Thyroid gland (tissue), 4 donors: ENCODE measurements at regions of chr3 and their contacts with region 1.

Region 1: DNA sequence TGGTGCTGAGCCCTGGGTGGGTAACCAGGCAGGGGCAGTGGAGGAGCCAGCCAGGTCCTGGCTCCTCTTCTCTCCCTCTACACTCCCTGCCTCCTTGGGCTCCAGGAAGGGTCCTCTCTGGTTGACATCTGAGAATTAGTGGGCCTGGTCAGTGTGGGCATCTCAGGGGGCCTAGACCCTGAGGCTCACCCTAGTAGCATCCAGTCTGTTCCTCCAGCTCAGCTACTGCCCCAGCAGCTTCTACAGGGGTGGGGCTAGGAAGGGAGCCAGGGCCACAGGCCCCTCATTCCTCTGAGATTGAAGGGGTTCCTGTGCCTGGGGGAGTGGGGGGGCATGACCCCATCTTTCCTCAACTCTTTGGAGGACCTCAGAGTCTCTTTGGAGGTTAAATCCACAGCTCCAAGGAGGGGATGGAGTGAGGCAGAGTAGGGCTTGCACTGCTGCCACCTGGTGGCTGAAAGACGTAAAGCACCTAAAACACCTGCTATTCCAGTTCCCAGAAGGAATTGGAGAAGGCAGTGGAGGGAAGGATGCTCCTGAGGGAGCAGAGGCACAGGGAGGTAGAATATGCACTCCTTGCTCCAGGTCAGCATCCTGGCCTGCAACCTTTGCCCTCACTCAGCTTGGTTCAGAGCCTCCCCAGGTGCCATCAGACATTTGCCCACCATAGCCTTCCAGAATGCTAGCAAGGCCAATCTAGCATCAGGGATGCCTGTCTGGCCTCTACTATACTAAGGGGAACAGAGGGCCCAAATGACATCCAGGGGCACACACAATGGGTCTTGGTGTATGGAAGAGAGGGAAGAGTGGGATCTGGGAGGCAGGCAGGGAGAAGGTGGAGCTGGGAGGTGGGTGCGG is 25.1 kb downstream of the C3orf18 start:
- DNase-seq: peak; percentile 75 to 76
- H3K4me3 ChIP-seq: no peak overlapping the region
- H3K27ac ChIP-seq: no peak overlapping the region
- H3K4me1 ChIP-seq: peaks cover 2 to 3% of the 10 kb centered on the region in 2 donors
- H3K27me3 ChIP-seq: no peaks in the 10 kb centered on the region
- CTCF ChIP-seq: peak; percentile 82 to 93 (median 88)
- POLR2A ChIP-seq: no peak

Region 2: GRCh38 chr3:50348037-50348436 is 194.4 kb before region 1 on chr3:
- intact Hi-C with region 1: loop called (anchors 2 kb)
- DNase-seq: no peak
- H3K4me3 ChIP-seq: no peak overlapping the region
- H3K27ac ChIP-seq: no peak overlapping the region
- H3K4me1 ChIP-seq: peaks cover 29 to 39% of the 10 kb centered on the region in 2 donors
- H3K27me3 ChIP-seq: no peaks in the 10 kb centered on the region
- CTCF ChIP-seq: no peak
- POLR2A ChIP-seq: no peak

Region 3: DNA sequence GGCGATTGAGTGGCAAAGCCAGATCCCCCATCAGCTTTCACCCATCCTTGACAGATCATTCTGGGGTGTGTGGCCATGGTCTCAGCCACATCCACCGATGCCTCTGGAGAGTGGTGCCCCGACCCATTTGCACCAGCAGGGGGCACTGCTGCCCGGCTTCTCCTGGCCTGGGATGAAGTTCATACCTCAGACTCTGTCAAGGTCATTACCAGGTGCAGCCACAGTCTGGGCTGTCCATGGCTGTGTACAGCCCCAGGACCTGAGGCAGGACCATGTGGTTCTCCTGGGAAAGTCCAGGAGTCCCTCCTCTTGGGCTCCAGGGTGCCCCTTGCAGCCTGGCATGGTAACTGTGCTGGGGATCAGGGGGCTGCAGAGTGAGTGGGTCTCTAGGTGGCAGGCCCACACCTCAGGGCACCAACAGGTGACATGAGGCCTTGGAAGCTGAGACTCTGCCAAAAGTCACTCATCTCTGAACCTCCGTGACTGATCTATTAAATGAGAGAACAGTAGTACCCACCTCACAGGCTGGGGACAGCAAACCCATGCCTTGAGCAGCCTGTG is 106.2 kb before region 1 on chr3:
- intact Hi-C with region 1: loop called (anchors 2 kb)
- DNase-seq: peak; percentile 75 to 80
- H3K4me3 ChIP-seq: no peak overlapping the region
- H3K27ac ChIP-seq: no peak overlapping the region
- H3K4me1 ChIP-seq: no peaks in the 10 kb centered on the region
- H3K27me3 ChIP-seq: no peaks in the 10 kb centered on the region
- CTCF ChIP-seq: peak; percentile 74 to 90 (median 84)
- POLR2A ChIP-seq: no peak

Region 4: DNA sequence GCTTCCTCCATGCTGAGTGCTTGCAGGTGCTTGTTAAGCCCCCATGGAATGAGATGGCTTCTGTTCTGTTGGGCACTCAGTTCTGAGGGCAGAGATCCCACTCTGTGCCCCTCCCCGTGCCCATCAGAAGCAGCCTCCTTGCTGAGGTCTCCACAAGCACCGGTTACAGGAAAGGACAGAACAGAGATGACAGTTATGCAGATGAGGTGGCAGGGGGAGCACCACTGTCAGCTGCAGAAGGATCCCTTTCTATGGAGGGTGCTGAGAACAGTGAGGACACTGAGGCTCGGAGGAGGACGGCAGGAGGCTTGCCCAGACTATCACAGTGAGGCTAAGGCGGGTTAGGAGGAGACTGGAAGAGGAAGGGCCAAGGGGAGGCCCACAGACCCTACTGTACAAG is 51.4 kb before region 1 on chr3:
- intact Hi-C with region 1: no loop called
- DNase-seq: no peak
- H3K4me3 ChIP-seq: no peak overlapping the region
- H3K27ac ChIP-seq: no peak overlapping the region
- H3K4me1 ChIP-seq: peaks cover 0 to 4% of the 10 kb centered on the region in 2 donors
- H3K27me3 ChIP-seq: no peaks in the 10 kb centered on the region
- CTCF ChIP-seq: no peak
- POLR2A ChIP-seq: no peak

Region 5: GRCh38 chr3:50611464-50612233 is 69.2 kb after region 1 on chr3 and contains the start of gene CISH:
- intact Hi-C with region 1: no loop called
- DNase-seq: peak; percentile 98 to 99
- H3K4me3 ChIP-seq: peak within 1 kb of the TSS; percentile 69 to 96 (median 82)
- H3K27ac ChIP-seq: peak within 1 kb of the TSS; percentile 99 to 100 (median 100)
- H3K4me1 ChIP-seq: peaks cover 41 to 59% of the 10 kb centered on the region in 2 donors
- H3K27me3 ChIP-seq: no peaks in the 10 kb centered on the region
- CTCF ChIP-seq: peak in 3 of 6 experiments; percentile 14 to 30 (median 28)
- POLR2A ChIP-seq: peak; percentile 86 to 95
- total RNA-seq, gene CISH: 31.0 to 78.1 (median 48.0) TPM

Region 6: GRCh38 chr3:50652709-50653108 is 110.3 kb after region 1 on chr3:
- intact Hi-C with region 1: no loop called
- DNase-seq: peak; percentile 27 to 52
- H3K4me3 ChIP-seq: no peak overlapping the region
- H3K27ac ChIP-seq: peak overlapping the region in 1 of 3 donors; percentile 12
- H3K4me1 ChIP-seq: peaks cover 18 to 34% of the 10 kb centered on the region in 2 donors
- H3K27me3 ChIP-seq: no peaks in the 10 kb centered on the region
- CTCF ChIP-seq: peak in 4 of 6 experiments; percentile 14 to 59 (median 41)
- POLR2A ChIP-seq: no peak